Activated CD4-positive, alpha-beta memory T cell treated with anti-CD3 and anti-CD28 coated beads for 36 hours (primary cell): ENCODE measurements at regions of chr17 and their contacts with region 1.

Region 1: GRCh38 chr17:50397111-50397918 is at the start of gene LRRC59:
- DNase-seq: peak; percentile 95
- H3K4me3 Mint-ChIP-seq: peak within 1 kb of the TSS; percentile 94
- H3K27ac Mint-ChIP-seq: peak within 1 kb of the TSS; percentile 82
- H3K4me1 Mint-ChIP-seq: peaks cover 27% of the 10 kb centered on the region
- H3K27me3 Mint-ChIP-seq: no peaks in the 10 kb centered on the region
- total RNA-seq, gene LRRC59: 77.1 to 78.8 TPM

Region 2: GRCh38 chr17:49935526-49936210 is 461.6 kb before region 1 on chr17:
- CTCF ChIA-PET with region 1: no interaction called
- POLR2A ChIA-PET with region 1: no interaction called
- intact Hi-C with region 1: no loop called
- DNase-seq: no peak
- H3K4me3 Mint-ChIP-seq: no peak overlapping the region
- H3K27ac Mint-ChIP-seq: no peak overlapping the region
- H3K4me1 Mint-ChIP-seq: no peaks in the 10 kb centered on the region
- H3K27me3 Mint-ChIP-seq: peaks cover 22% of the 10 kb centered on the region

Region 3: DNA sequence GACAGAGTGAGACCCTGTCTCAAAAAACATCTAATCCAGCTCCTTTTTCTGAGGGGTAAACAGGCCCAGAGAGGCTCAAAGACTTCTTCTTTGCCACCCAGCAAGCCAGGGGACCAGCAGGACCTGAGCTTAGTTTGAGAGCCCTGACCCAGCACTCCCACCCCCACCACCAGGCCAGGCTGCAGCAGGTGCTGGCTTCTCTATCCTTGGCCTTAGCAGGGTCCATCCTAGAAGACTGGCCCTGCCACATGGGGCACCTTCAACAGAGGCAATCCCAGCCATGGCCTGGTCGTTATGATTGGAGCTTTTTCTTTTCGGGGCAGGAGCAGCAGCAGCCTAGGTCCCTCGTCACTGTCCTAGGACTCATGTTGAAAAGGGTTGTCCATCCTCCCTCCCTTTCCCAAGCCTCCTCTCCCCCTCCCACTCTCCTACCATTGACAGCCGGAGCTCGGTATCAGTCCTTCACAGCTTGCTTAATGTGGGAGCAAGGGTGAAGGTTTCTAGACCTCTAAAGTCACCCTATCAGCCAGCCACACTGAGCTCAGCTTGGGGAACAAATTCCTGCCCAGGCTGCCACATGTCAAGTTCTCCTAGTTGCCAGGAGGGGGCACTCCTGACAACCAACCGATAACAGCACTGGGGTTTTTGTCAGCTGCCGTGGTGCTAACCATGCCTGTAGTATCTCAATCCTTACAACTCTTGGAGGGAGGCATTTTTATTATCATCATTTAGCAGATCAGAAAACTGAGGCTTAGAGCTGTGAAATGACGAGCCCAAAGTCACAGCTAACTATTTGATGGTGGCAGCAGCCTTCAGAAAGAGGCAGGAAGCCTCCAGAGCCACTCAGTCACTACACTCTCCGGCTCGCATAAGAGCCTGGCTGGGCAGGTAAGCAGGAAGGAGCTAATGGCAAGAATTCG is 35.5 kb before region 1 on chr17:
- CTCF ChIA-PET with region 1: interaction called, 79 read pairs
- POLR2A ChIA-PET with region 1: interaction called, 12 read pairs
- intact Hi-C with region 1: loop called (anchors 5 kb)
- DNase-seq: peak; percentile 75
- H3K4me3 Mint-ChIP-seq: no peak overlapping the region
- H3K27ac Mint-ChIP-seq: peak overlapping the region; percentile 75
- H3K4me1 Mint-ChIP-seq: peaks cover 9% of the 10 kb centered on the region
- H3K27me3 Mint-ChIP-seq: no peaks in the 10 kb centered on the region

Region 4: GRCh38 chr17:50372758-50373556 is 24.4 kb before region 1 on chr17 and contains the starts of genes EME1 and MRPL27:
- CTCF ChIA-PET with region 1: interaction called, 27 read pairs
- POLR2A ChIA-PET with region 1: interaction called, 17 read pairs
- intact Hi-C with region 1: loop called (anchors 2 kb)
- DNase-seq: peak; percentile 90
- H3K4me3 Mint-ChIP-seq: peak within 1 kb of the TSS; percentile 97
- H3K27ac Mint-ChIP-seq: peak within 1 kb of the TSS; percentile 99
- H3K4me1 Mint-ChIP-seq: peaks cover 28% of the 10 kb centered on the region
- H3K27me3 Mint-ChIP-seq: no peaks in the 10 kb centered on the region
- total RNA-seq, gene EME1: 47.7 to 48.1 TPM
- total RNA-seq, gene MRPL27: 53.9 to 64.5 TPM

Region 5: GRCh38 chr17:50380369-50381259 is 16.7 kb before region 1 on chr17:
- CTCF ChIA-PET with region 1: interaction called, 24 read pairs
- POLR2A ChIA-PET with region 1: interaction called, 4 read pairs
- intact Hi-C with region 1: no loop called
- DNase-seq: no peak
- H3K4me3 Mint-ChIP-seq: no peak overlapping the region
- H3K27ac Mint-ChIP-seq: no peak overlapping the region
- H3K4me1 Mint-ChIP-seq: no peaks in the 10 kb centered on the region
- H3K27me3 Mint-ChIP-seq: no peaks in the 10 kb centered on the region

Region 6: GRCh38 chr17:50386510-50386909 is 10.8 kb before region 1 on chr17:
- CTCF ChIA-PET with region 1: interaction called, 24 read pairs
- POLR2A ChIA-PET with region 1: interaction called, 4 read pairs
- intact Hi-C with region 1: no loop called
- DNase-seq: no peak
- H3K4me3 Mint-ChIP-seq: no peak overlapping the region
- H3K27ac Mint-ChIP-seq: no peak overlapping the region
- H3K4me1 Mint-ChIP-seq: no peaks in the 10 kb centered on the region
- H3K27me3 Mint-ChIP-seq: no peaks in the 10 kb centered on the region

Region 7: GRCh38 chr17:50425682-50426471 is 28.6 kb after region 1 on chr17 and contains the start of gene ACSF2:
- CTCF ChIA-PET with region 1: interaction called, 27 read pairs
- POLR2A ChIA-PET with region 1: interaction called, 12 read pairs
- intact Hi-C with region 1: no loop called
- DNase-seq: peak; percentile 83
- H3K4me3 Mint-ChIP-seq: peak within 1 kb of the TSS; percentile 81
- H3K27ac Mint-ChIP-seq: peak within 1 kb of the TSS; percentile 43
- H3K4me1 Mint-ChIP-seq: peaks cover 27% of the 10 kb centered on the region
- H3K27me3 Mint-ChIP-seq: no peaks in the 10 kb centered on the region
- total RNA-seq, gene ACSF2: 20.1 to 23.6 TPM

Region 8: DNA sequence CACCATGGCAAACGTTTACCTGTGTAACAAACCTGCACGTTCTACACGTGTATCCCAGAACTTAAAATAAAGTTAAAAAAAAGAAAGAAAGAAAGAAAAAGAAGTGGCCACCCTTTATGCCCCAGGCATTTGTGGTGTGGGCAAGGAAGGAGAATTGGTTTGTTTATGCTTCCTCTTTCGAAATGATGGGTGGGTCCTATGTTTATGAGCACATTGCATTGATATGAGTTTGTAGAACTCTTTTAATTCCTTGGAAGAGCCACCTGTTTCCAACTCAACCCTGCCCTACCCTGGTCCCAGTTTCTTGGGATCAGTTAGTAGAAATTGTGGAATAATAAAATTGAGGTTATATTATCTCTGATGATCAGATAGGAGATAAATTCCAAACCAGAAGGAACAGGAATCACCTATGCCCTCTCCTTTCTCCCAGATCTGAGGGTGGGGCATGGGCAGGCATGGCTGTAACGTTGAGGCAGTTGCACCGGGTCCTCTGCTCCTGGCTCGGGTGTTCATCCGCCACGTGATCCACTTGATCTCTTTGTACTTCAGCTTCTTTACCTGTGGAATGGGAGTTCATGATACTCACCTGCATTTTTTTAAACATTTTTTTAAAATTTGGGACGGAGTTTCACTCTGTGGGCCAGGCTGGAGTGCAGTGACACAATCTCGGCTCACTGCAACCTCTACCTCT is 55.4 kb after region 1 on chr17:
- CTCF ChIA-PET with region 1: no interaction called
- POLR2A ChIA-PET with region 1: no interaction called
- intact Hi-C with region 1: no loop called
- DNase-seq: no peak
- H3K4me3 Mint-ChIP-seq: no peak overlapping the region
- H3K27ac Mint-ChIP-seq: no peak overlapping the region
- H3K4me1 Mint-ChIP-seq: no peaks in the 10 kb centered on the region
- H3K27me3 Mint-ChIP-seq: no peaks in the 10 kb centered on the region